ENCODE measurements at regions of chr9 and their contacts with region 1.

Region 1: GRCh38 chr9:35116898-35117551 is 1.4 kb upstream of the ATOSB start:
- H3K4me3 Mint-ChIP-seq: peak overlapping the region; percentile 92
- H3K27ac Mint-ChIP-seq: peak overlapping the region; percentile 88
- H3K4me1 Mint-ChIP-seq: peaks cover 38% of the 10 kb centered on the region
- H3K27me3 Mint-ChIP-seq: no peaks in the 10 kb centered on the region

Region 2: GRCh38 chr9:35102926-35103659 is 13.9 kb before region 1 on chr9 and contains the start of gene STOML2:
- intact Hi-C with region 1: loop called (anchors 1 kb)
- H3K4me3 Mint-ChIP-seq: peak within 1 kb of the TSS; percentile 98
- H3K27ac Mint-ChIP-seq: peak within 1 kb of the TSS; percentile 93
- H3K4me1 Mint-ChIP-seq: peaks cover 58% of the 10 kb centered on the region
- H3K27me3 Mint-ChIP-seq: no peaks in the 10 kb centered on the region

Region 3: GRCh38 chr9:35161713-35162604 is 44.9 kb after region 1 on chr9 and contains the start of gene UNC13B:
- intact Hi-C with region 1: loop called (anchors 1 kb)
- H3K4me3 Mint-ChIP-seq: peak within 1 kb of the TSS; percentile 92
- H3K27ac Mint-ChIP-seq: peak within 1 kb of the TSS; percentile 94
- H3K4me1 Mint-ChIP-seq: peaks cover 19% of the 10 kb centered on the region
- H3K27me3 Mint-ChIP-seq: peaks cover 10% of the 10 kb centered on the region

Region 4: DNA sequence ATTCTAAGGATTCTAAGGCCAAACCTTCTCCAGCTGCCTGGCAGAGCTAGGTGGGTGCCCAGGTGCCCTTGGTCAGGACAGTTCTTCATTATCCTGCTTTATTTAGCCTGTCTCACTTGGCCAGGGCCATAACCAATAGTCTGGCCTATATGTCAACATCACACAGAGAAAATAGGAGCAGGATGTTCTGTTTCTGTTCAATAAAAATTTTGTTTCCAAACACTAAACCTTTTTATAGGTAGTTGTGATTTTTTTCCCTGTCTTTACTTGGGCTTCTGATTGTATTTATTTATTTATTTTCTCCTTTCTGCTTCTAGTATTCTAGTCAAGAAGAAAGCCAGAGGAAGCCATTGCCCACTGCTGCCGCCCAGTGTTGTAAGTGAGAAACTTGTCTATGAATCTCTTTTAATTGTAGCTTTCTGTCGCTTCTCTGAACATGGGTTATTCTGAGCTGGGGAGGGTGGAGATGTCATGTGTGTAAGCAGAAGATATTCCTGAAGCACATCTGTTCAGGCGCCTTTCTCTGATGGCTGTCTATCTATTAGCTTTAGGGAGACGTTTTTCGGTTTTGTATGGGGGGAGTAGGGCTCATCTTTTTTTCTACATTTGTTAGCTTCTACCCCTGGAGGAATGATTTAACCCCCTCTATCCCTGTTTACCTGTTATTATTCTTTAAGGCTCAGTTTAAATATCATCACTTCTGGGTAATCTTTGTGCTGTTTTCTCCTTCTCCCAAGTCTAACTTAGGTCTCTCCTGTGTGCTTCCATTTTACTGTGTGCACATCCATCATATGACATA is 141.8 kb after region 1 on chr9:
- intact Hi-C with region 1: loop called (anchors 1 kb)
- H3K4me3 Mint-ChIP-seq: no peak overlapping the region
- H3K27ac Mint-ChIP-seq: no peak overlapping the region
- H3K4me1 Mint-ChIP-seq: peaks cover 5% of the 10 kb centered on the region
- H3K27me3 Mint-ChIP-seq: no peaks in the 10 kb centered on the region

Region 5: GRCh38 chr9:35374436-35374835 is 257.4 kb after region 1 on chr9:
- intact Hi-C with region 1: no loop called
- H3K4me3 Mint-ChIP-seq: no peak overlapping the region
- H3K27ac Mint-ChIP-seq: no peak overlapping the region
- H3K4me1 Mint-ChIP-seq: no peaks in the 10 kb centered on the region
- H3K27me3 Mint-ChIP-seq: no peaks in the 10 kb centered on the region

Region 6: GRCh38 chr9:35481347-35481975 is 364.4 kb after region 1 on chr9:
- intact Hi-C with region 1: loop called (anchors 1 kb)
- H3K4me3 Mint-ChIP-seq: no peak overlapping the region
- H3K27ac Mint-ChIP-seq: no peak overlapping the region
- H3K4me1 Mint-ChIP-seq: no peaks in the 10 kb centered on the region
- H3K27me3 Mint-ChIP-seq: peaks cover 3% of the 10 kb centered on the region

Region 7: DNA sequence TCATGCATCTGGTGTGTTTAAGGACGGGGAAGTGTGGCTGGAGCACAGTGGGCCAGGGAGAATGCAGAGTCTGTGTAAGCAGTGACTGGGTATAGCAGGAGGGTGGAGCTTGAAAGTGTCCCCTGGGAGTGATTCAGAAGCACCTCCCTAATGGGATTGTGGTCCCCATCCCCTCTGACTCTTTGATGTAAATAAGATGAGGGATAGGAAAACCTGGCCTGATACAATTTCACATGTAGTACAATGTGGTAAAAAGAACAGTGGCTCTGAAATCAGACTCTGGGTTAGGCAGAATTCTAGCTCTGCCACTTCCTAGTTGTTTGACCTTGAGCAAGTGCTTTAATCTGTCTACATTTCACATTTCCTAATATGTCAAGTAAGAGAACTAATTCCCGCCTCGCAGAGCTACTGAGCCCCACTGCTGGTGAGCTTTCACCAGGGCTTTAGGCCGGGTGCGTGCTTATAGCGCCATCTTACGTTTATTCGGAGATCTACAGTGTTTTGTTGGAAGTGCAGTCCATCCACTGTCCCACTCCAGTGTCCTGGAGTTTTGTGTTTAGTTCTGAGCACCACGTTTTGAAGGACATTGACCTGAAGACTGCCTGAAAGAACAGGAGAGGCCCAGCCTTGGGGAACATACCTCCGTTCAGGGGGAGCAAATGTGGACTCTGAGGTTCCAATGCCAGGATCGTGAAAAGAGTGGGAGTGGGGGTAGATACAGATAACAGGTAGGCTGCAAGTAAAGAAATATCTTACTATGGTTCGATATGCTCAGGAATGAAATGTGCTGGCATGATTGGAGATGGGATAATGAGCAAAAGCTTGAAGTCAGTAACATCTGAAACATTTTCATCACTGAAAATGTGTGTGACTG is 436.9 kb after region 1 on chr9:
- intact Hi-C with region 1: loop called (anchors 2 kb)
- H3K4me3 Mint-ChIP-seq: no peak overlapping the region
- H3K27ac Mint-ChIP-seq: no peak overlapping the region
- H3K4me1 Mint-ChIP-seq: peaks cover 3% of the 10 kb centered on the region
- H3K27me3 Mint-ChIP-seq: no peaks in the 10 kb centered on the region